Dendritic cell treated with granulocyte-macrophage colony-stimulating factor and Interleukin-4, amounts not matched to agents 40 ng/mL and 50 ng/mL, for 4 days (primary cell): ENCODE measurements at regions of chr10 and their contacts with region 1.

Region 1: DNA sequence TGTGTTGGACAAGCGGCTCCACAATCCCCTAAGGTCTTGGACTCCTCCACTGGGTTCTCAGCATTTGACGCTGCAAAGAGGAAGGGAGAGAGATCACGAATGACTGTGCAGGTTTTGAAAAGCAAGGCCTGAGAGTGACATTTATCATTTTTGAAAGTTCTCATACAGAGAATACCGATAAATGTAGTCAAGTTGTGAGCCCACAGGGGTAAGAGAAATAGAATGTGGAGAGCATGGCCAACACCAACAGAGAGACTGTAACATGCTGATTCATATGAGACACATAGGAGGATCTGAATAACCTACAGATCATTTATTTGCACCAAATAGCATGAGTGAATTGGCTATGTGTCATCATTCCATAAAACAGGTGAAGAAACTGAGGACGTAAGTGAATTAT is 230.5 kb upstream of the MBL2 start:
- H3K4me3 Mint-ChIP-seq: no peak overlapping the region
- H3K27ac Mint-ChIP-seq: peak overlapping the region; percentile 47
- H3K4me1 Mint-ChIP-seq: peaks cover 28% of the 10 kb centered on the region
- H3K27me3 Mint-ChIP-seq: peaks cover 2% of the 10 kb centered on the region

Region 2: GRCh38 chr10:53122281-53122680 is 119.2 kb after region 1 on chr10:
- intact Hi-C with region 1: loop called (anchors 10 kb)
- H3K4me3 Mint-ChIP-seq: no peak overlapping the region
- H3K27ac Mint-ChIP-seq: peak overlapping the region; percentile 22
- H3K4me1 Mint-ChIP-seq: peaks cover 20% of the 10 kb centered on the region
- H3K27me3 Mint-ChIP-seq: no peaks in the 10 kb centered on the region